ENCODE measurements at regions of chr2 and their contacts with region 1.

Region 1: GRCh38 chr2:36355151-36355889 is at the start of gene CRIM1:
- DNase-seq: peak; percentile 84
- H3K4me3 Mint-ChIP-seq: peak within 1 kb of the TSS; percentile 96
- H3K27ac Mint-ChIP-seq: peak within 1 kb of the TSS; percentile 61
- H3K4me1 Mint-ChIP-seq: peaks cover 31% of the 10 kb centered on the region
- H3K27me3 Mint-ChIP-seq: peaks cover 60% of the 10 kb centered on the region
- total RNA-seq, gene CRIM1: 16.8 and 19.0 TPM in 2 replicates

Region 2: GRCh38 chr2:35871672-35872071 is 483.6 kb before region 1 on chr2:
- intact Hi-C with region 1: loop called (anchors 10 kb)
- DNase-seq: no peak
- H3K4me3 Mint-ChIP-seq: no peak overlapping the region
- H3K27ac Mint-ChIP-seq: no peak overlapping the region
- H3K4me1 Mint-ChIP-seq: no peaks in the 10 kb centered on the region
- H3K27me3 Mint-ChIP-seq: peaks cover 6% of the 10 kb centered on the region

Region 3: DNA sequence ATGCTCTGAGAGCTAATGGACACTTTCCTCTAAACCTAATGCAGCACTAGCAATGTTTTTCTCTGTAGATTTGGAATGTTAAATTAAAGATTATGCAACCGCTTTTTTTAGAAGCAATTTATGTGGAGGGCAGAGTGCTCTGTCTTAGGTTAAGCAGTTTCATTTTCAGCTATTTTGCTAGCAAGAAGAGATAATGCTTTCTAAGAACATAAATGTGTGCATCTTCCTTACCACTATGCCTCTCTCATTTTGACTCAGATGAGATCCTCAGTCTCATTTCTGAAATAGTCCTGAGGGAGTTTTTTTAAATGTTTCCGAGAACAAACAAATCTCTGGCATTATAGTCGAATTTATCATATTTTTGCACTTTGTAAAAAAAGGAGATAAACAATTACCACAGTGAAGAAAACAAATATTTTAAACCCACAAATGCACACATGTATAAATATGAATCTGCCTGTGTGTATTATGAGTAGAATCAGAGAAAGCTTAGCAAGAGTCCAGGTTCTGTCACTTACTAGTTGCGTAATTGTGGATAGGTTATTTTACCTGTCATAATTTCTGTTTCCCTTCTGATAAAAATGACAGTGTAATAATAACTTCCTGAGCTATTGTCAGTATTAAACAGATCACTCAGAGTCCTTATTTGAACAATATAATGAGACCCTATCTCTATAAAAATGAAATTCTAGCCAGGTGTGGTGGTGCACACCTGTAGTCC is 207.5 kb before region 1 on chr2:
- intact Hi-C with region 1: loop called (anchors 2 kb)
- DNase-seq: peak; percentile 58
- H3K4me3 Mint-ChIP-seq: no peak overlapping the region
- H3K27ac Mint-ChIP-seq: no peak overlapping the region
- H3K4me1 Mint-ChIP-seq: peaks cover 22% of the 10 kb centered on the region
- H3K27me3 Mint-ChIP-seq: peaks cover 22% of the 10 kb centered on the region

Region 4: GRCh38 chr2:36403675-36404230 is 48.4 kb after region 1 on chr2:
- intact Hi-C with region 1: loop called (anchors 1 kb)
- DNase-seq: peak; percentile 61
- H3K4me3 Mint-ChIP-seq: no peak overlapping the region
- H3K27ac Mint-ChIP-seq: no peak overlapping the region
- H3K4me1 Mint-ChIP-seq: peaks cover 2% of the 10 kb centered on the region
- H3K27me3 Mint-ChIP-seq: no peaks in the 10 kb centered on the region

Region 5: DNA sequence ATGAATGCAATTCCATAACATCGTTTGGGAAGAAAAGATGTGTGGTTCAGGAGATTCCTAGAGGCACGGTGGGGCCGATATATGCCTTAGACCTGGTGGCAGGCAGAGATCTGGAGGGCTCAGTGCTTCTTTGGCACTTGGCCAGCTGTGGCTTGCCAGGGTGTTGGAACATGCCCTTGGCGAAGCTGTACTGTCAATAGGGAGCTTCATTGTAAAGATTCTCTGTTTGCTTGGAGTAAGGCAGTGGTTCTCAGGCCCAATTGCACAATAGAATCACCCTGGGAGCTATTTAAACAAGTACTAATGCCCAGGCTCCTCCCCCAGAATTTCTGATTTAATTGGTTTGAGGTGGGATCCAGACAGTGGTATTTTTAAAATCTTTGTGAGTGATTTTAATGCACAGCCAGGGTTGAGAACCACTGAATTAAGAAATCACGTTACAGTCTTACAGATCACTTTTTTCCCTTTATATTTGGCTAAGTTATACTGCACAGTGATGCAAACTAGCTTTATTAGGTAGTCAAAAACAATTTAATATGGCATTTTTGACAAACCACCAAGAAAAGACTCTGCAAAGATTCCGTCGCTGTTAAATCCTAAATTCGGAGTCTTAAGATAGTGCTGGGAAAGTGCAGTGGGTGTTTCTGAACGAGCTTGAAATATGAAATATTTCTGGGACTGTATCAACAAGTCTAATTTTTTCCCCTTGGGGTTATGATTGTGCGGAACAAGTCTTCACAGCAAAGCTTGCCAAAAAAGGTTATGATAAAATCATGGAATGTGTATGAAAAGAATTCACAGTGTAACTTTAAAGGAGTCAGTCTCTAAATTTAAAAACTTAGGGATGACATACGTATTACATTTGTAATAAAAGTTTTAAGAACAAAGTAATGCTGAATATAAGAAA is 78.2 kb after region 1 on chr2:
- intact Hi-C with region 1: no loop called
- DNase-seq: no peak
- H3K4me3 Mint-ChIP-seq: no peak overlapping the region
- H3K27ac Mint-ChIP-seq: no peak overlapping the region
- H3K4me1 Mint-ChIP-seq: no peaks in the 10 kb centered on the region
- H3K27me3 Mint-ChIP-seq: no peaks in the 10 kb centered on the region

Region 6: DNA sequence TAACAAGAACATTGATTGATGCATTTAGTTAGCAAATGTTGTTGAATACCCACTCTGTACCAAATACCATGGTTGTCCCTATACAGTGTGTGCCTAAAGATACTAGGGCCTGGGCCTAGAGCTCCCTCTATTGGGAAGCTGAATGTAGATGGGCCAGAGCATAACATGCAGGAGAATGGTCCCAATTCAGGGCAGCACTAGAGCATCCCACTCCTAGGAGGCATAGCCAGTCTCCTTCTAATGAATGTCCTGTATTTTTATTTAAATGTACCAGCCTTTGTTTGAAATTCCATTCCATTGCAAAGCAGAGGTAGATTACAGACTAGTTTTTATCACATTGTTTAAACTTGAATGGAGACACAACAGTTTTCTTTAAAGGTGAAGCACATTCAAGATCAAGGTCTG is 152.1 kb after region 1 on chr2:
- intact Hi-C with region 1: loop called (anchors 1 kb)
- DNase-seq: peak; percentile 79
- H3K4me3 Mint-ChIP-seq: no peak overlapping the region
- H3K27ac Mint-ChIP-seq: no peak overlapping the region
- H3K4me1 Mint-ChIP-seq: no peaks in the 10 kb centered on the region
- H3K27me3 Mint-ChIP-seq: no peaks in the 10 kb centered on the region

Region 7: DNA sequence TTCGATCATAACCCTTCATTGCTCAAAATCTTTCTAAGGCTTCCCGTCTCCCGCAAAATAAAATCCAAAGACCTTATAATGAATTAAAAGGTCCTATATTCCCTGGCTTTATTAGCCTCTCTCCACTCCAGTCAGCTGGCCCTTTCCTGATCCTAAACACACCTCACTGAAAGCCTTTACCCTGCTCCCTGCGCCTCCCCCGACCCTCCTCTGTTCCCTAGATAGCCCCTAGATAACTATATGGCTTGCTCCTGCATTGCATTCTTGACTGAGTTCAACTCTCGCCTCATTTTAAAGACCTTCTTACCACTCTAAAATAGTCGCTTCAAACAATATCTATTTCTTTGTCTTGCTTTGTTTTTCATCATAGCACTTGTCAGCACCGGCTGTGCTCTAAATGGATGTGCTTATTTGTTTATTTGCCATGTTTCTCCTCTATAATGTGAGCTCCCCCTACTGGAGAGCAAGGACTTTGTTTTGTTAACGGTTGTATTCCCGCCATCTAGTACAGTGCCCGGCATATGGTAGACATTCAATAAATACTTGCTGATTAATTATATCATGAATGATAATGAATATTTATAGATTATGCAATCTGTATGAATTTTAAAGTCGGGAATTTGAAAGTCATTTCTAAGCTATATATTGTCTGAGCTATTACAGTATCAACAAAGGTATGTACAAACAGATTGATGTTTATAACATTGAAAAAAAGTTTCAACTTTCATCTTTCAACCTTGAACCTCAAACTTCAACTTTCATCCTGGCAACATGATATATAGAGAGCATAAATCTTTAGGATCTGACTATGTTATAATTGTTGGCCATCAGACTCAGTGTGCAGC is 308.8 kb after region 1 on chr2:
- intact Hi-C with region 1: loop called (anchors 1 kb)
- DNase-seq: peak; percentile 77
- H3K4me3 Mint-ChIP-seq: no peak overlapping the region
- H3K27ac Mint-ChIP-seq: no peak overlapping the region
- H3K4me1 Mint-ChIP-seq: no peaks in the 10 kb centered on the region
- H3K27me3 Mint-ChIP-seq: peaks cover 7% of the 10 kb centered on the region